Prostate gland (tissue), 2 donors: ENCODE measurements at regions of chr3 and their contacts with region 1.

Region 1: GRCh38 chr3:128969993-128970739 is 23.7 kb downstream of the CFAP92 start:
- DNase-seq: no peak
- H3K4me3 ChIP-seq: no peak overlapping the region
- H3K27ac ChIP-seq: no peak overlapping the region
- H3K4me1 ChIP-seq: peaks cover 2% of the 10 kb centered on the region
- H3K27me3 ChIP-seq: no peaks in the 10 kb centered on the region
- CTCF ChIP-seq: peak; percentile 75 to 83 (median 76)
- POLR2A ChIP-seq: no peak

Region 2: DNA sequence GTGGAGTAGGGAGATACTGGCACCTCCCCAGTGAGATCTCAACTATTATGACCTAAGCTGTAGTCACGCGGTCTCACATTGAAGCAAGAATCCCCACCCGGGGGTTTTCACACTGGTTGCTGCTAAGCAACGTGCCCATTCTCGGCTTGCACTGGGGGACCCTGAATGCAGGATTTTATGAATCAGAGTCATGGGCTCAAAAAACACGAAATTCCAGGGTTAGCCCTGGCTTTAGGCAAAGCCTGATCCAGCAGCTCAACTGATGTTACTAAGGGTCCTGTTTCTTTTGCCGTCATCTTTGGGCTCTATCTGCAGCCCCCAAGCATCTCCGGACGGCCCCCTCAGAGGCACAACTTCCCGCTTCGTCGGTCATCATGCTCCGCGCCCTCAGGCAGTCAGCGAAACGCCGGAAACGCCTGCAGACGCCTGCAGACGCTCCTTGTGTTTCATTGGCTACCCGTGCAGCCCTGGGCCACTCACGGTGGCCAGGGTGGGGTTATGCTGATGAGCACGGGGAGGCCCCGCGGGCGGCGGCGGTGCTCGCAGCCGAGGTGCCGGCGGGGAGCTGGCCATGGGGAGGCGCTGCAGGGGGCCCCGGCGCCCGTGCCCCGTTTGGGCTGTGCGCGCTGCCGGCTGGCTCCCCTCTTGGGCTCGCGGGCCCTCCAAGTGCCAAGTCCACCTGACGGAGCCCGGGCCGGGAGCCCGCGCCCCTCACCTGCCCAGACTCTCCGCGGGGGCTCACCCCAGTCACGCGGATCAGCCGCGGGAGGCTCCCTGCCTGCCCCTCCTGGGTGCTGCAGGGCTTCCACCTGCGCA is 56.8 kb after region 1 on chr3:
- intact Hi-C with region 1: no loop called
- DNase-seq: peak; percentile 92
- H3K4me3 ChIP-seq: peak overlapping the region; percentile 36 to 41
- H3K27ac ChIP-seq: peak overlapping the region; percentile 34 to 54
- H3K4me1 ChIP-seq: no peaks in the 10 kb centered on the region
- H3K27me3 ChIP-seq: no peaks in the 10 kb centered on the region
- CTCF ChIP-seq: peak in 3 of 4 experiments; percentile 70 to 92 (median 86)
- POLR2A ChIP-seq: peak; percentile 35

Region 3: GRCh38 chr3:129058441-129059200 is 88.5 kb after region 1 on chr3:
- intact Hi-C with region 1: loop called (anchors 10 kb)
- DNase-seq: peak; percentile 76
- H3K4me3 ChIP-seq: no peak overlapping the region
- H3K27ac ChIP-seq: peak overlapping the region; percentile 26 to 66
- H3K4me1 ChIP-seq: peaks cover 10% of the 10 kb centered on the region
- H3K27me3 ChIP-seq: no peaks in the 10 kb centered on the region
- CTCF ChIP-seq: peak in 2 of 4 experiments; percentile 11 to 25
- POLR2A ChIP-seq: no peak

Region 4: GRCh38 chr3:129087138-129087702 is 117.1 kb after region 1 on chr3:
- intact Hi-C with region 1: loop called (anchors 10 kb)
- DNase-seq: peak; percentile 72
- H3K4me3 ChIP-seq: no peak overlapping the region
- H3K27ac ChIP-seq: peak overlapping the region; percentile 82 to 83
- H3K4me1 ChIP-seq: peaks cover 4% of the 10 kb centered on the region
- H3K27me3 ChIP-seq: no peaks in the 10 kb centered on the region
- CTCF ChIP-seq: no peak
- POLR2A ChIP-seq: no peak

Region 5: GRCh38 chr3:129195731-129196256 is 225.6 kb after region 1 on chr3:
- intact Hi-C with region 1: no loop called
- DNase-seq: peak; percentile 64
- H3K4me3 ChIP-seq: no peak overlapping the region
- H3K27ac ChIP-seq: peak overlapping the region; percentile 25 to 50
- H3K4me1 ChIP-seq: peaks cover 7% of the 10 kb centered on the region
- H3K27me3 ChIP-seq: no peaks in the 10 kb centered on the region
- CTCF ChIP-seq: no peak
- POLR2A ChIP-seq: no peak

Region 6: DNA sequence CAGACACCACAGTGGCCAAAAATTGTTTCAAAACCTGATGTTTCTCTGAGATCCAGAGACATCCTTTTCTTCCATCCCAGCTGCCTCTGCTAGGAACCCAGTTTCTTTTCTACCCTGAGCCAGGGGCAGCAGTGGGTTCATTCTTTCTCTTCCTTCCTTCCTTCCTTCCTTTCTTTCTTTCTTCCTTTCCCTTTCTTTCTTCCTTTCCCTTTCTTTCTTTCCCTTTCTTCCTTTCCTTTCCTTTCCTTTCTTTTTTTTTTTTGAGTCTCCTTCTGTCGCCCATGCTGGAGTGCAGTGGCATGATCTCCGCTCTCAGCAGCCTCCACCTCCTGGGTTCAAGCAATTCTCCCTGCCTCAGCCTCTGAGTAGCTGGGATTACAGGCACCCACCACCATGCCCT is 248.6 kb after region 1 on chr3:
- intact Hi-C with region 1: no loop called
- DNase-seq: no peak
- H3K4me3 ChIP-seq: no peak overlapping the region
- H3K27ac ChIP-seq: no peak overlapping the region
- H3K4me1 ChIP-seq: no peaks in the 10 kb centered on the region
- H3K27me3 ChIP-seq: no peaks in the 10 kb centered on the region
- CTCF ChIP-seq: no peak
- POLR2A ChIP-seq: no peak

Region 7: DNA sequence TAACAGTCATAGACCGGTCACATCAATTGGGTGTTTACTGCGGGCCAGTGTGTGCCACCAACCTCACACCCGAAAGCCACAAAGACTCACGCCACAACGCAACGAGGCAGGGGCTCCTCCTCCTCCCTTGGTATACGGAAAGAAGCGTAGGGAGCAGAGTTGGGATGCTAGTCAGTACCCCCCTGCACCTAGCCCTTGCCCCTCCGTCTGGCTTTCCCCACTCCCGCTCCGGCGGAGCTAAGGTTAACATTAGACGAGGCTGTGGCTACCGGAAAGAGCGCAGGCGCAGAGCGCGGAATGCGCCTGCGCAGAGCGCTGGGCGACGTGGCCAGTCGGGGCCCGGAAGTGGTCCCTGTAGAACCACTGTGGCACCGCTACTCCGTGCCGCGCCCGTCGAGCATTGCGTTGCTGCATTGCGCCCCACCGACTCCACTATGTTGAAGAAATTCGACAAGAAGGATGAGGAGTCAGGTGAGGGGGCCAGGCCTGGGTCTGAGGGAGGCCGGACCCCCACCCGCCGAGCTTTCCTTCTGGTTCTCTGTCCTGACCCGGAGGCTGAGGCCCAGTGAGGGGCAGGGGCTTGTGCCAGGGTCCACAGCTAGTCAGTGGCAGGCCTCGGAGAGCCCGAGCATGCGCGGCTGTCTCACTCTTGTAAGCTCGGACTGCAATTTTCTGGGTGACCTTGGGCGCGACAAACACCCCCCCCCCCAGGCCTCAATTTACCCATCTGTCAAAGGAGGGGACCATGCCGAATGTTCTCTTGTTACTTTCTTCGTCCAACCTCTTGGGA is 279.3 kb after region 1 on chr3 and contains the start of gene COPG1:
- intact Hi-C with region 1: loop called (anchors 5 kb)
- DNase-seq: peak; percentile 77
- H3K4me3 ChIP-seq: peak within 1 kb of the TSS; percentile 68 to 98
- H3K27ac ChIP-seq: peak within 1 kb of the TSS; percentile 81 to 85
- H3K4me1 ChIP-seq: peaks cover 7% of the 10 kb centered on the region
- H3K27me3 ChIP-seq: no peaks in the 10 kb centered on the region
- CTCF ChIP-seq: peak in 1 of 4 experiments; percentile 29
- POLR2A ChIP-seq: peak; percentile 95
- total RNA-seq, gene COPG1: 143 to 220 TPM